ENCODE measurements at regions of chr1 and their contacts with region 1.

Region 1: GRCh38 chr1:167227934-167228378 is 7.3 kb downstream of the POU2F1 start:
- DNase-seq: no peak
- ATAC-seq: no peak
- H3K4me3 ChIP-seq: no peak overlapping the region
- H3K4me3 Mint-ChIP-seq: no peak overlapping the region
- H3K27ac ChIP-seq: no peak overlapping the region
- H3K27ac Mint-ChIP-seq: no peak overlapping the region
- H3K4me1 ChIP-seq: peaks cover 12% of the 10 kb centered on the region
- H3K4me1 Mint-ChIP-seq: peaks cover 64% of the 10 kb centered on the region
- H3K27me3 ChIP-seq: no peaks in the 10 kb centered on the region
- H3K27me3 Mint-ChIP-seq: no peaks in the 10 kb centered on the region
- CTCF ChIP-seq: no peak

Region 2: GRCh38 chr1:165898837-165899236 is 1329.1 kb before region 1 on chr1:
- CTCF ChIA-PET with region 1: no interaction called
- POLR2A ChIA-PET with region 1: no interaction called
- intact Hi-C with region 1: loop called in 1 of 2 experiments (anchors 10 kb)
- DNase-seq: no peak
- ATAC-seq: no peak
- H3K4me3 ChIP-seq: no peak overlapping the region
- H3K4me3 Mint-ChIP-seq: no peak overlapping the region
- H3K27ac ChIP-seq: no peak overlapping the region
- H3K27ac Mint-ChIP-seq: no peak overlapping the region
- H3K4me1 ChIP-seq: no peaks in the 10 kb centered on the region
- H3K4me1 Mint-ChIP-seq: peaks cover 3% of the 10 kb centered on the region
- H3K27me3 ChIP-seq: no peaks in the 10 kb centered on the region
- H3K27me3 Mint-ChIP-seq: no peaks in the 10 kb centered on the region
- CTCF ChIP-seq: no peak

Region 3: DNA sequence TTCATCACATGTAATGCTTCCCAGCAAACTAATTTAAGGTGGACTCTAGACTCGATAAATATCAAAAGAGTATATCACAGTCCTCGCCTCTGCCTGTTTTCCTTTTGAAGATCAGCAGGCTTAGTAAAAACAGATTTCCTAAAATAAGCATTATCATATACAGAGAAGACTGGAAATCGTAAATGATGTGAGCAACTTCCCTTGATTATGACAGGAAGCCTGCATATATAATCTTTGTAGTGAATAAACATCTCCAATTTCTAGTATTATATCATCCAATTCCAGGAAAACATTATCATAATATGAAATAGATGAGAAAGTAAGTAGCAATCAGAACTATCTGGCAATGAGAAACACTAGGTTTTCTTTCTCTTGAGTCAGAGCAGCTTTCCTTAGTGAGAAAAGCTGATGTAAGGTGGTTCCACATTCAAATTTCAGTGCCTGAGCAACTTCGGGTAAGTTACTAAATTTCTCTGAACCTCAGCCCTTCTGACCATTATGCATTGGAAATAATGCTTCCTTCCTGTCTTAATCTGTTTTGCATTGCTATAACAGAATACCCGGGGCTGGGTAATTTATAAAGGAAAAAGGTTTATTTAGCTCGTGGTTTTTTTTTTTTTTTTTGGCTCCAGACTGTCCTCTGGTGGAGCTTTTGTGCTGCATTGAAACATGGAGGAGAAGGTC is 19.9 kb before region 1 on chr1:
- CTCF ChIA-PET with region 1: no interaction called
- POLR2A ChIA-PET with region 1: no interaction called
- intact Hi-C with region 1: loop called in 1 of 2 experiments (anchors 1 kb)
- DNase-seq: no peak
- ATAC-seq: no peak
- H3K4me3 ChIP-seq: no peak overlapping the region
- H3K4me3 Mint-ChIP-seq: no peak overlapping the region
- H3K27ac ChIP-seq: no peak overlapping the region
- H3K27ac Mint-ChIP-seq: no peak overlapping the region
- H3K4me1 ChIP-seq: no peaks in the 10 kb centered on the region
- H3K4me1 Mint-ChIP-seq: no peaks in the 10 kb centered on the region
- H3K27me3 ChIP-seq: peaks cover 0 to 3% of the 10 kb centered on the region in 2 experiments
- H3K27me3 Mint-ChIP-seq: no peaks in the 10 kb centered on the region
- CTCF ChIP-seq: no peak

Region 4: DNA sequence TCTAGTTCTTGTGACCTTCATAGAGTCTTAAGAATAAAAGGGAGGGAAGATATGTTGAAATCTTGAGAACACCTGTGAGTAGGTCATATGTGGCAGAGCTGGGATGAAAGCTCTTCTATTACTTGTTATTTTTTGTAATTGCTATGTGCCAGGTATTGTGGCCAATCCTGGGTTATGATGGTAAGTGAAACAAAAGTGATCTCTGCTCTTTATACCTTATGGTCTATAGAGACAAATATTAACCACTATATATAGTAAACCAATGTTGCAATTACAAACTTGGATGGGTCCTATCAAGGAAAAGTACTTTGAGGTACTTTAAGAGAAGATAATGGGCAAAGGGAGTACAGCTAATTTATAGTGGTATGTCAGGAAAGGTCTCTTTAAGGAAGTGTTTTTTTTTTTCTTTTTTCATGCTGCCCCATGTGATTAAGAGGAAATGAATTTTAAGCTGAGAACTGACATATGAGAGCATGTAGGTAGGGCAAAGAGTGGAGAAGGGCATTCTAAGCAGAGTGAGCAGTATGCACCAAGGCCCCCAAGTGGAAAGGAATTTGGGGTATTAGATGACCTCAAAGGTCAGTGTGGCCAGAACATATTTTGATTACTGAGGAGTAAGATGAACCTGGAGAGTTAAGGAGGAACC is 36.0 kb after region 1 on chr1:
- CTCF ChIA-PET with region 1: interaction called, 5 read pairs
- POLR2A ChIA-PET with region 1: interaction called, 4 read pairs
- intact Hi-C with region 1: loop called in 1 of 2 experiments (anchors 2 kb)
- DNase-seq: peak in 2 of 9 experiments; percentile 6 to 35
- ATAC-seq: peak; percentile 35
- H3K4me3 ChIP-seq: no peak overlapping the region
- H3K4me3 Mint-ChIP-seq: no peak overlapping the region
- H3K27ac ChIP-seq: peak overlapping the region in 1 of 2 experiments; percentile 18
- H3K27ac Mint-ChIP-seq: no peak overlapping the region
- H3K4me1 ChIP-seq: peaks cover 48% of the 10 kb centered on the region
- H3K4me1 Mint-ChIP-seq: peaks cover 34% of the 10 kb centered on the region
- H3K27me3 ChIP-seq: no peaks in the 10 kb centered on the region
- H3K27me3 Mint-ChIP-seq: no peaks in the 10 kb centered on the region
- CTCF ChIP-seq: no peak

Measured in CD8-positive, alpha-beta T cell (primary cell).